B cell (primary cell): ENCODE measurements at regions of chr6 and their contacts with region 1.

Region 1: DNA sequence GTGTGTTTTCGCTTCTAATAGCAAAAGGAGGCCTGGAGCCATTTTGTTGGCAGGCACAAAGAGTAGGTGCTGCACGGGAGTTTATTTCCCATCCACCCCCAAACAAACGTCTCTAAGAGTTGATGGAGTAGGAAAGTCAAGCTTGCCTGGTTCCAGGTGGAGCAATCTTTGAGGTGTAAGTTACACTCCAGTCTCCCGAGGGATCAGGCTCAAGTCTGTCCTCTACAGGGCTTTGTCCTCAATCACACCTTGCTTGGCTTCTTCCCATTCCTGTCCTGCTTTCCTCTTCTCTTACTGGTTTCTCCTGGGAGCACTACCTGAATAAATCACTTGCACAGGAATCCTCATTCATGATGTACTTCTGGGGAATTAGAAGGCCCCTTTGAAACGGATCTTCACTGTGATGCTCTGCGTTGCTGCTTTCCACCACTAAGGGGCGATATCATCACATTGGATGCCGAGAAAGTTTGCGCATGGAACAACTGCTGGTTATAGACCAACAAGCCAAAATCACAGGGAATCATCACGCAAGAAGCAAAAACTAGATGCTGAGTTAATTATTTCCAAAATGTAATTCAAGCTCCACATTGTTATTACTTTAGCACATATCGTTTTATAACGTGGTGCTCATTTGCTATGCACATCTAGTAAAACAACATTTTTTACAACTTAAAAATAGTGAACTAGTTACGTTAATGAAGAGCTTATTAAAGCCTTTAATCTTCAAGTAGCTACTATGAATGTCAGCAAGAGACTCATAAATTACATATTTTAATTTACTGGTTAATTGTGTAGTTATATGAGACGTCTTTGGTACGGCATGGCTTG is 156.8 kb downstream of the DNAH8 start:
- DNase-seq: peak; percentile 53
- ATAC-seq: no peak
- H3K4me3 ChIP-seq: no peak overlapping the region
- H3K4me3 Mint-ChIP-seq: no peak overlapping the region
- H3K27ac ChIP-seq: no peak overlapping the region
- H3K27ac Mint-ChIP-seq: no peak overlapping the region
- H3K4me1 ChIP-seq: no peaks in the 10 kb centered on the region
- H3K4me1 Mint-ChIP-seq: peaks cover 3% of the 10 kb centered on the region
- H3K27me3 ChIP-seq: no peaks in the 10 kb centered on the region
- H3K27me3 Mint-ChIP-seq: peaks cover 3% of the 10 kb centered on the region
- CTCF ChIP-seq: peak; percentile 93

Region 2: DNA sequence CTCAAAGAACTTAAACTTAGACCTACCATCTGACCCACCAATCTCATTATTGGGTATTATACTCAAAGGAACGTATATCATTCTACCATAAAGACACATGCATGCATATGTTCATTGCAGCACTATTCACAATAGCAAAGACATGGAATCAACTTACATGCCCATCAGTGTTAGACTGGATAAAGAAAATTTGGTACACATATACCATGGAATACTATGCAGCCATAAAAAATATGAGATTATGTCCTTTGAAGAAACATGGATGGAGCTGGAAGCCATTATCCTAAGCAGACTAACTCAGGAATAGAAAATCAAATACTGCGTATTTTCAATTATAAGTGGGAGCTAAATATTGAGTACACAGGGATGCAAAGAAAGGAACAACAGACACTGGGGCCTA is 10.2 kb after region 1 on chr6:
- CTCF ChIA-PET with region 1: interaction called, 10 read pairs
- POLR2A ChIA-PET with region 1: no interaction called
- intact Hi-C with region 1: no loop called
- DNase-seq: no peak
- ATAC-seq: no peak
- H3K4me3 ChIP-seq: no peak overlapping the region
- H3K4me3 Mint-ChIP-seq: no peak overlapping the region
- H3K27ac ChIP-seq: no peak overlapping the region
- H3K27ac Mint-ChIP-seq: no peak overlapping the region
- H3K4me1 ChIP-seq: no peaks in the 10 kb centered on the region
- H3K4me1 Mint-ChIP-seq: no peaks in the 10 kb centered on the region
- H3K27me3 ChIP-seq: peaks cover 0 to 6% (median 2%) of the 10 kb centered on the region in 4 experiments
- H3K27me3 Mint-ChIP-seq: no peaks in the 10 kb centered on the region
- CTCF ChIP-seq: no peak

Region 3: DNA sequence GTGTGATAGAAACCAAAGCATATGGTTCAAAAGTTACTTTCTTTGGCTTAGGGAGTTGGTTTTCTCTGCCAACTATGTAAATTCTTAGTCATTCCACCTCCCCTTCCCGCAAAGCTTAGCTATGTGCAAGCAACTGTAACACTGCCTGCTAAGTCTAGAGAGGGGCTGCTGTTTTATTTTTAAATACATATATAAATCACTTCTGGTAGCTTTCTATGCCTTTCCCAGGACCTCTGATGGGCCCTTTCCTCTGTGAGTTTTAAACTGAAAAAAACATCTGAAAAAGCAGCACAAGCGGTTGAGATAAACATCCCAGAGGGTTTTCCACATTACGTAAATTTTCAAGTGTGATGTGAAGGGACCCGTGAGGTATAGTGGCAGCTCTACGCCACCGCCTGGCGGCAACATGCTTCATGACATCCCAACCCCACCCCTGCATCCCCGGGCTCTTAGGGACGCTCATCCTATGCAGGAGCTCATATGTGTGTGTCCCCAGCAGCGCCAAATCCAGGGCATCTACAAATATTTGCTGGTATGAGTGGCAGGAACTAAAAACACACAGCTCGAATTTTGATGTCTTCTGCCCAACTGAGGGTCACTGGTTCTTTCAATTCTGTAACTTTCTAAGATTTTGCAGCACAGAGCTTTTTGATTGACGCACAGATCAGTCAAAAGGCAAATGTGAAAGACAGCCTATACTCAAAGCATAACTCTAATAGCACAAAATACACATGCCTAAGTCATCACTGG is 230.3 kb after region 1 on chr6:
- CTCF ChIA-PET with region 1: interaction called, 4 read pairs
- POLR2A ChIA-PET with region 1: no interaction called
- intact Hi-C with region 1: loop called (anchors 5 kb)
- DNase-seq: peak; percentile 24
- ATAC-seq: peak; percentile 71
- H3K4me3 ChIP-seq: no peak overlapping the region
- H3K4me3 Mint-ChIP-seq: no peak overlapping the region
- H3K27ac ChIP-seq: no peak overlapping the region
- H3K27ac Mint-ChIP-seq: no peak overlapping the region
- H3K4me1 ChIP-seq: no peaks in the 10 kb centered on the region
- H3K4me1 Mint-ChIP-seq: peaks cover 10% of the 10 kb centered on the region
- H3K27me3 ChIP-seq: no peaks in the 10 kb centered on the region
- H3K27me3 Mint-ChIP-seq: no peaks in the 10 kb centered on the region
- CTCF ChIP-seq: peak; percentile 37

Region 4: GRCh38 chr6:39302669-39303424 is 430.9 kb after region 1 on chr6:
- CTCF ChIA-PET with region 1: interaction called, 102 read pairs
- POLR2A ChIA-PET with region 1: no interaction called
- intact Hi-C with region 1: no loop called
- DNase-seq: peak; percentile 85
- ATAC-seq: peak; percentile 92
- H3K4me3 ChIP-seq: peak overlapping the region in 1 of 5 experiments; percentile 29
- H3K4me3 Mint-ChIP-seq: peak overlapping the region; percentile 74
- H3K27ac ChIP-seq: no peak overlapping the region
- H3K27ac Mint-ChIP-seq: no peak overlapping the region
- H3K4me1 ChIP-seq: peaks cover 4 to 7% of the 10 kb centered on the region in 2 donors
- H3K4me1 Mint-ChIP-seq: peaks cover 4% of the 10 kb centered on the region
- H3K27me3 ChIP-seq: peaks cover 0 to 4% (median 0%) of the 10 kb centered on the region in 4 experiments
- H3K27me3 Mint-ChIP-seq: peaks cover 13% of the 10 kb centered on the region
- CTCF ChIP-seq: peak; percentile 85

Region 5: DNA sequence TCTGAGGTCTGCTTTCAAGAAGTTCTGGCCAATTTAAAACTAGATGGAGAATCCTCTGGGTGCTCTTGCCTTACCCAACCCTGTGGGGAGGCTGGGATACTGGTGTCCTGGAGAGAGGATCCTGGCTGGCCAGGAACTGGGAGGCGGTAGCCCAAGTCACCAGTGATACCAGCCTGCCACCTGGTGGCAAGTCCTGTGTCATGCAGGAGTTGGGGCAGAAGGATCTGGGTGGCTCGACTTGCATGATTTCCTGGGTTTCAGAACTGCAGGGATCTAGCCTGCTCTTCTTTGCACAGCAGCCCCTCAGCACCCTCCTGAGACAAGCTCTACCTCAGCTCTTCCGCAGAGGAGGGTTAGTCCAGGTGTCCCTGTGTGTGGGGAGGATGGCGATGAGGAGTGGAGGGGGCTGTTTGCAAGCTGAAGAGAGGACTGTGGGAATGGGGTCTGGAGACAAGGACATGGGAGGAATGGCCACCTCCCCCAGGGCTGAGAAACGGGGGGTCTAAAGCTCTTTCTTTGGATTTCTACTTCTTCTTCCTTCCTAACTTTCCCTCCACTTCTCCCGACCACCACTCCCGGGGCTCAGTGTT is 438.1 kb after region 1 on chr6:
- CTCF ChIA-PET with region 1: interaction called, 102 read pairs
- POLR2A ChIA-PET with region 1: no interaction called
- intact Hi-C with region 1: loop called (anchors 1 kb)
- DNase-seq: peak; percentile 65
- ATAC-seq: peak; percentile 56
- H3K4me3 ChIP-seq: no peak overlapping the region
- H3K4me3 Mint-ChIP-seq: no peak overlapping the region
- H3K27ac ChIP-seq: no peak overlapping the region
- H3K27ac Mint-ChIP-seq: no peak overlapping the region
- H3K4me1 ChIP-seq: peaks cover 21 to 23% of the 10 kb centered on the region in 2 donors
- H3K4me1 Mint-ChIP-seq: peaks cover 24% of the 10 kb centered on the region
- H3K27me3 ChIP-seq: peaks cover 0 to 41% (median 23%) of the 10 kb centered on the region in 4 experiments
- H3K27me3 Mint-ChIP-seq: peaks cover 32% of the 10 kb centered on the region
- CTCF ChIP-seq: peak; percentile 85